ENCODE measurements at regions of chr12 and their contacts with region 1.

Region 1: GRCh38 chr12:990661-991349 is at the start of gene ERC1:
- DNase-seq: peak; percentile 82
- H3K4me3 Mint-ChIP-seq: peak within 1 kb of the TSS; percentile 91
- H3K27ac Mint-ChIP-seq: peak within 1 kb of the TSS; percentile 88
- H3K4me1 Mint-ChIP-seq: peaks cover 35% of the 10 kb centered on the region
- H3K27me3 Mint-ChIP-seq: peaks cover 7% of the 10 kb centered on the region
- total RNA-seq, gene ERC1: 33.6 and 34.3 TPM in 2 replicates

Region 2: GRCh38 chr12:401235-402028 is 589.4 kb before region 1 on chr12 and contains the start of gene CCDC77:
- intact Hi-C with region 1: loop called (anchors 5 kb)
- DNase-seq: peak; percentile 93
- H3K4me3 Mint-ChIP-seq: no peak within 1 kb of the TSS
- H3K27ac Mint-ChIP-seq: no peak within 1 kb of the TSS
- H3K4me1 Mint-ChIP-seq: no peaks in the 10 kb centered on the region
- H3K27me3 Mint-ChIP-seq: no peaks in the 10 kb centered on the region
- total RNA-seq, gene CCDC77: 12.6 and 14.6 TPM in 2 replicates

Region 3: DNA sequence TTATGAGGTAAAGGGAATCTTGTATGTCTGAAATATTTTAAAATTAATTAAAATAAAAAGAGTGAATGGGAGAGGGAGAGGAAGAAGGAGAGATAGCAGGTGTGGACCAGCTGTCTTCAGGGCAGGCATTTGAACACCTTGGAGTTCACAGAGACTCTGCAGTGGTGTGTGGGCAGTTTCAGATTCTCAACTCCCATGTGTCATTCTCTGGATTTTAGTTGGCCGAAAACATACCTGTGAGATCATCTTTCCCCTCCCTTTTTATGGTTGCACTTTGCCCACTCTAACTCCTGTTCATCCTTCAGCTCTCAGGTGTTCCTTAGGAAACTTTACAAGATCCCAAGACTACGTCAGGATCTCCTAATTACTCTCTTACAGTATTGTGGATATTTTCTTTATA is 108.4 kb after region 1 on chr12:
- intact Hi-C with region 1: loop called (anchors 5 kb)
- DNase-seq: no peak
- H3K4me3 Mint-ChIP-seq: no peak overlapping the region
- H3K27ac Mint-ChIP-seq: no peak overlapping the region
- H3K4me1 Mint-ChIP-seq: peaks cover 31% of the 10 kb centered on the region
- H3K27me3 Mint-ChIP-seq: peaks cover 1% of the 10 kb centered on the region

Region 4: GRCh38 chr12:1367331-1368291 is 376.8 kb after region 1 on chr12:
- intact Hi-C with region 1: no loop called
- DNase-seq: no peak
- H3K4me3 Mint-ChIP-seq: no peak overlapping the region
- H3K27ac Mint-ChIP-seq: no peak overlapping the region
- H3K4me1 Mint-ChIP-seq: no peaks in the 10 kb centered on the region
- H3K27me3 Mint-ChIP-seq: no peaks in the 10 kb centered on the region

Region 5: GRCh38 chr12:1583421-1584078 is 592.7 kb after region 1 on chr12:
- intact Hi-C with region 1: loop called (anchors 2 kb)
- DNase-seq: peak; percentile 58
- H3K4me3 Mint-ChIP-seq: no peak overlapping the region
- H3K27ac Mint-ChIP-seq: no peak overlapping the region
- H3K4me1 Mint-ChIP-seq: peaks cover 23% of the 10 kb centered on the region
- H3K27me3 Mint-ChIP-seq: peaks cover 5% of the 10 kb centered on the region

Measured in activated T-helper 1 cell treated with anti-CD3 and anti-CD28 coated beads, Interleukin-12 subunit alpha, Interleukin-12 subunit beta, Interleukin-2, Interleukin-4 antibody, amounts not matched to agents 30 ng/mL and 10 ng/mL and 1 ng/mL, durations not matched to agents 14 hours and 24 hours and 36 hours (primary cell).